PC-3 (cell line): ENCODE measurements at regions of chr3 and their contacts with region 1.

Region 1: GRCh38 chr3:177050501-177051237 is 146.6 kb downstream of the TBL1XR1 start:
- DNase-seq: peak; percentile 67
- ATAC-seq: peak; percentile 71
- H3K4me3 ChIP-seq: no peak overlapping the region
- H3K27ac ChIP-seq: no peak overlapping the region
- H3K4me1 ChIP-seq: no peaks in the 10 kb centered on the region
- H3K27me3 ChIP-seq: no peaks in the 10 kb centered on the region
- CTCF ChIP-seq: peak; percentile 75

Region 2: GRCh38 chr3:176939022-176939817 is 111.4 kb before region 1 on chr3:
- CTCF ChIA-PET with region 1: no interaction called
- POLR2A ChIA-PET with region 1: no interaction called
- intact Hi-C with region 1: no loop called
- DNase-seq: peak; percentile 86
- ATAC-seq: peak; percentile 96
- H3K4me3 ChIP-seq: peak overlapping the region; percentile 40; the same call in 1 of the 2 replicates
- H3K27ac ChIP-seq: no peak overlapping the region
- H3K4me1 ChIP-seq: peaks cover 4% of the 10 kb centered on the region; the same call in 1 of the 2 replicates
- H3K27me3 ChIP-seq: no peaks in the 10 kb centered on the region
- CTCF ChIP-seq: peak; percentile 94

Region 3: GRCh38 chr3:177378168-177378567 is 327.5 kb after region 1 on chr3:
- CTCF ChIA-PET with region 1: no interaction called
- POLR2A ChIA-PET with region 1: interaction called, 20 read pairs
- intact Hi-C with region 1: no loop called
- DNase-seq: no peak
- ATAC-seq: no peak
- H3K4me3 ChIP-seq: no peak overlapping the region
- H3K27ac ChIP-seq: no peak overlapping the region
- H3K4me1 ChIP-seq: no peaks in the 10 kb centered on the region
- H3K27me3 ChIP-seq: no peaks in the 10 kb centered on the region
- CTCF ChIP-seq: no peak

Region 4: GRCh38 chr3:177652556-177653291 is 602.1 kb after region 1 on chr3:
- CTCF ChIA-PET with region 1: no interaction called
- POLR2A ChIA-PET with region 1: no interaction called
- intact Hi-C with region 1: loop called (anchors 10 kb)
- DNase-seq: no peak
- ATAC-seq: no peak
- H3K4me3 ChIP-seq: no peak overlapping the region
- H3K27ac ChIP-seq: no peak overlapping the region
- H3K4me1 ChIP-seq: no peaks in the 10 kb centered on the region
- H3K27me3 ChIP-seq: no peaks in the 10 kb centered on the region
- CTCF ChIP-seq: no peak

Region 5: GRCh38 chr3:177777699-177778098 is 727.0 kb after region 1 on chr3:
- CTCF ChIA-PET with region 1: no interaction called
- POLR2A ChIA-PET with region 1: no interaction called
- intact Hi-C with region 1: loop called (anchors 2 kb)
- DNase-seq: peak; percentile 67
- ATAC-seq: peak; percentile 67
- H3K4me3 ChIP-seq: no peak overlapping the region
- H3K27ac ChIP-seq: no peak overlapping the region
- H3K4me1 ChIP-seq: peaks cover 20% of the 10 kb centered on the region
- H3K27me3 ChIP-seq: no peaks in the 10 kb centered on the region
- CTCF ChIP-seq: peak; percentile 73

Region 6: DNA sequence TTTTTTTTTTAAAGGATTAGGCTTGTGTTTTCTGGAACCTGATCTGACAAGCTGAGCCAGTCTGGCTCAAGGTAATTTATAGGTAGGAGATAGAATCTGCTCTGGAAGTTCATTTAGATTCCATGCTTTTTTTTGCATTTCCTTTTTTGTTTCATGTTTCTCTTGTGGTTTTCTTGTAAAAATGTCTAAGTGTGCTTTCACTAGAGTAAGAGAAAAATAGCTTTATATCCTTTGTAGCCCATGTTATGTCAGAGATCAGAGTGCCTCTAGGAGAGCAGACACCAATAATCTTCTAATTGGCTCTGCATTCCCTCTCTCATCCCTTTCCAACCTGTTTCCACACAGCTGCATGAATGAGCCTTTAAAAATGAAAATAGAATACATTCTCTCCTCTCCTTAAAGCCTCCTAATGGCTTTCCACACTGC is 1095.8 kb after region 1 on chr3:
- CTCF ChIA-PET with region 1: no interaction called
- POLR2A ChIA-PET with region 1: no interaction called
- intact Hi-C with region 1: loop called (anchors 10 kb)
- DNase-seq: peak; percentile 41
- ATAC-seq: peak; percentile 49
- H3K4me3 ChIP-seq: no peak overlapping the region
- H3K27ac ChIP-seq: no peak overlapping the region
- H3K4me1 ChIP-seq: peaks cover 5% of the 10 kb centered on the region; the same call in 1 of the 2 replicates
- H3K27me3 ChIP-seq: no peaks in the 10 kb centered on the region
- CTCF ChIP-seq: no peak